ENCODE measurements at regions of chr11 and their contacts with region 1.

Region 1: DNA sequence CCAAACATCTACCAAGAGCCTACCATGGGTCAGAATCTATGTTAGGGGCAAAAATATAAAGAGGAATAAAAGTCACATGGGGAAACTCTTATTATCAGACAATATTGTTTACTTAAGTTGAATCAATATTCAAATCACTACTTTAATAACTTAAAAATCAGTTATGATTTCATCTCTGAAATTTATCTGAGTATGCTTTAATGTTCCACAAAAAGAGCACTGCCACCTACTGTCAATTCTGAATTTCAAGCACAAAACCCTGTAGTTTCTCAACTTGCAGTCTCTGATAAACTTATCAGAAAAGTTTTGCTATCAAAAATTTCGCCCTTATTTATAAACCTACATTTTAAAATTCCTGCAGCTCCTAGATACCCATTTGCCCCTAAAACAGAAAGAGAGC is 47.4 kb downstream of the RDX start:
- DNase-seq: peak; percentile 35
- ATAC-seq: no peak
- H3K4me3 ChIP-seq: no peak overlapping the region
- H3K27ac ChIP-seq: no peak overlapping the region
- H3K4me1 ChIP-seq: peaks cover 19% of the 10 kb centered on the region
- H3K27me3 ChIP-seq: no peaks in the 10 kb centered on the region
- CTCF ChIP-seq: peak; percentile 71

Region 2: DNA sequence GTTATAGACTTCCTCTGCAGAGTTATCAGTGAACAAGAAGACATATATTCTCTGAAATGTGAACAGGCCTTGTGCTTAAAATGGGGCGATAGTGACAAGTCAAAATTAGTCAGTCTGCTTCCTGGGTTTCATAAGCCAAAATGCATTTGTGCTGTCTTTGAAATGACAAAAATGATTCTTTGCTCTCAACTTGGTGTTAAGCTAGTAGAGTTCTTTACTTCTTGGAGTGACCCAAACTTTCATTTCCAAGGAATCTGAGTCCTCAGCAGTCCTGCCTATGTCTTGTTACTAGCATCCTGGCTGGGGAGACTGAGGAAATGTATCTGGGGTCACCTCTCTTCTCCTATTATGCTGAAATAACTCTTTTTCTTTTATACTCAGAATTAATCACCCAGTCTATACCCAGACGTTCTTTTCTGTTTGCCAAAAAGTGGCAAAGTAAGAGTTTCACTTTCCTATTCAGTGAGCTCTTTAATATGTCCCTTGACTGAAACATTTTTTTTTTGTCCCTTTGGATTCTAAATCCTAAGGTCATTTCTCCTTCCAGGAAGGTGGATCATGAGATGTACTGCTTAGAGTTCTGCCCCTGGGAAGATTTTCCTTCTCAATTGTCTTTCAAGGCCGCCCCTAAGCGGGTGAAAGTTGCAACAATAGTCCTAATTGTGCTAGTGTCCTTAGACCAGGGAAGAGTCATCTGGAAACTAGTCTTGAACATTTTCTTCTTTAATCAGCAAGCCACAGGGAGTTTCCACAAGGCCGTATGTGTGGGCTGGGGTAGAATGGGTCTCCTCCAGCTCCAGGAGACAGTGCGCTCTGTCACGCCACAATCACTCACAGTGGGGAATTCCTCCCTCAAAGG is 100.3 kb after region 1 on chr11:
- CTCF ChIA-PET with region 1: no interaction called
- POLR2A ChIA-PET with region 1: interaction called, 17 read pairs
- intact Hi-C with region 1: no loop called
- DNase-seq: no peak
- ATAC-seq: no peak
- H3K4me3 ChIP-seq: no peak overlapping the region
- H3K27ac ChIP-seq: no peak overlapping the region
- H3K4me1 ChIP-seq: peaks cover 18% of the 10 kb centered on the region
- H3K27me3 ChIP-seq: no peaks in the 10 kb centered on the region
- CTCF ChIP-seq: no peak

Region 3: GRCh38 chr11:110362971-110363509 is 114.0 kb after region 1 on chr11:
- CTCF ChIA-PET with region 1: interaction called, 5 read pairs
- POLR2A ChIA-PET with region 1: no interaction called
- intact Hi-C with region 1: loop called (anchors 2 kb)
- DNase-seq: peak; percentile 72
- ATAC-seq: peak; percentile 94
- H3K4me3 ChIP-seq: peak overlapping the region; percentile 46
- H3K27ac ChIP-seq: peak overlapping the region; percentile 70
- H3K4me1 ChIP-seq: peaks cover 27% of the 10 kb centered on the region
- H3K27me3 ChIP-seq: no peaks in the 10 kb centered on the region
- CTCF ChIP-seq: no peak

Region 4: DNA sequence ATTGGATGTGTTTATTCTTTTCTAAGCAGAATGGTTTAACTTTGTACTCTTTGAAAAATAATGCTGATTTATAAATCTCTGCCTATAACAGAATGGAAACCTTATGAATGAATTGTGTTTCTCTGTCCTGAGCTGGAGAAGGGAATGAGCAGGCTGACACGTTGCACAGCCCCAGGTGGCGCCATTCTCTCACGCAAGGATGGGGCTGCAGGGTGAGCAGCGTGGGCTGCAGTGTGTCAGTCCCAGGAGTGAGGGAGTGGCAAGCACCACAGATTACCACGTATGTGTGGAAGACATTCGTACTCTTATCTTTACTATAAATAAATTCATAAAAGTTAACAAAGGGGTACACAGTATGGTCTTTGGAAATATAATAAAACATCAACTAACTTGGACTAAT is 214.1 kb after region 1 on chr11:
- CTCF ChIA-PET with region 1: no interaction called
- POLR2A ChIA-PET with region 1: no interaction called
- intact Hi-C with region 1: no loop called
- DNase-seq: peak; percentile 51
- ATAC-seq: peak; percentile 89
- H3K4me3 ChIP-seq: no peak overlapping the region
- H3K27ac ChIP-seq: no peak overlapping the region
- H3K4me1 ChIP-seq: no peaks in the 10 kb centered on the region
- H3K27me3 ChIP-seq: no peaks in the 10 kb centered on the region
- CTCF ChIP-seq: peak; percentile 70

Measured in PC-3 (cell line).